ENCODE measurements at regions of chr19 and their contacts with region 1.

Region 1: DNA sequence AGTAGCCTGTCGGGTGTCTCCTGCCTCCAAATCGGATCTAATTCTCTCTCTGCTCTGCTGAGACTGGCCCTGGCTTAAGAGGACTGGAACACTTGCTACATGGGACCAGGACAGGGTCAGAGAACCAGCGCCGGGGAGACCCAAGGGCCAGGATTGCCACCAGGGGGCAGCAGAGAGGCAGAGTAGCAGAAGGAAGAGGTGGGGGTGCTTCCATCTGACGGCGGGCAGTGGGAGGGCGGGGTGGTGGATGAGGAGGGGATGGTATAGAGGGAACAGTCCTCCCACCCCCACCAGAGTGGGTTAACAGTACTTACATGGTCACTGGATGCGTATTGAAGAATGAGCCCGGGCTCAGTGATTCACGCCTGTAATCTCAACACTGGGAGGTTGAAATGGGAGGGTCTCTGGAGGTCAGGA is 11.9 kb downstream of the SELENOW start:
- DNase-seq: peak; percentile 82
- H3K4me3 Mint-ChIP-seq: no peak overlapping the region
- H3K27ac Mint-ChIP-seq: no peak overlapping the region
- H3K4me1 Mint-ChIP-seq: peaks cover 9% of the 10 kb centered on the region
- H3K27me3 Mint-ChIP-seq: no peaks in the 10 kb centered on the region
- CTCF ChIP-seq: peak; percentile 84

Region 2: DNA sequence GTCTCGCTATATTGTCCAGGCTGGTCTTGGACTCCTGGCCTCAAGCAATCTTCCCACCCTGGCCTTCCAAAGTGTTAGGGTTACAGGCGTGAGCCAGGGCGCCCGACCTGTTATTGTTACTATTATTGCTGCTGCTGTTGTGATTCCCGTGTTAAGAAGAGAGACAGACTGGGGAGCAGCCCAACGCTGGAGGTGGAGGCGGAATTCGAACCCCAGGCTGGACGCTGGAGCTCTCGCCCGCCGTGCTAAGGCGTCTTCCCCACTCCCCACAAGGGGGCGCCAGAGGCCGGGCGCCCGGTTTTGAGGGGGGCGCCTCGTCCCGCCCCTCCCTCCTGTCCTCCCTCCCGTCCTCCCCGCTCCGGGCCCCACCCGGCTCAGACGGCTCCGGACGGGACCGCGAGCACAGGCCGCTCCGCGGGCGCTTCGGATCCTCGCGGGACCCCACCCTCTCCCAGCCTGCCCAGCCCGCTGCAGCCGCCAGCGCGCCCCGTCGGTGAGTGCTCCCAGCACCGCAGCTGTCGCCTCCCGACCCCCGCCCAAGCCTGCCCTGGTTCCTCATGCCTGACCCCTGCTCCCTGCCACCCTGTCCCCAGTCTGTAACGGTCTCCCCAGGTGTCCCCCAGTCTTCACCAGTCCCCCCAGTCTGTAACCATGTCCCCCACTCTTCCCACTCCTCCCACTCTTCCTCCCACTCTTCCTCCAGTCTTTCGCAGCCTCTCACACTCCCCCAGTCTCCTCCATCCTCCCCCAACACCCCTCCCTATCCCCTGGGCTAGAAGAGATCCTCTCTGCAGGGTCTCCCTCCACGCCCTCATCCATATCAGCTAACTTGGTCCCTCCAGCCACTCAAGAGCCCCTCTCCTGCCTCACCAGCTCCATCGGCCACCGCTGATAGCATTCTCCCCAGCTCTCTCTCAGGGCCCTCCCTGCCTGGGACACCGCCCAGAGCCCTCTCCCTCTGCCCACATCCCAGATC is 77.1 kb before region 1 on chr19 and contains the start of gene EHD2:
- CTCF ChIA-PET with region 1: interaction called, 9 read pairs
- POLR2A ChIA-PET with region 1: interaction called, 5 read pairs
- intact Hi-C with region 1: loop called (anchors 2 kb)
- DNase-seq: peak; percentile 81
- H3K4me3 Mint-ChIP-seq: peak within 1 kb of the TSS; percentile 90
- H3K27ac Mint-ChIP-seq: peak within 1 kb of the TSS; percentile 62
- H3K4me1 Mint-ChIP-seq: peaks cover 24% of the 10 kb centered on the region
- H3K27me3 Mint-ChIP-seq: no peaks in the 10 kb centered on the region
- CTCF ChIP-seq: peak; percentile 97
- total RNA-seq, gene EHD2: 88.8 and 104 TPM in 2 replicates

Region 3: GRCh38 chr19:47765523-47766358 is 24.7 kb before region 1 on chr19:
- CTCF ChIA-PET with region 1: interaction called, 6 read pairs
- POLR2A ChIA-PET with region 1: interaction called, 4 read pairs
- intact Hi-C with region 1: loop called (anchors 1 kb)
- DNase-seq: peak; percentile 69
- H3K4me3 Mint-ChIP-seq: no peak overlapping the region
- H3K27ac Mint-ChIP-seq: no peak overlapping the region
- H3K4me1 Mint-ChIP-seq: no peaks in the 10 kb centered on the region
- H3K27me3 Mint-ChIP-seq: no peaks in the 10 kb centered on the region
- CTCF ChIP-seq: peak; percentile 72

Region 4: DNA sequence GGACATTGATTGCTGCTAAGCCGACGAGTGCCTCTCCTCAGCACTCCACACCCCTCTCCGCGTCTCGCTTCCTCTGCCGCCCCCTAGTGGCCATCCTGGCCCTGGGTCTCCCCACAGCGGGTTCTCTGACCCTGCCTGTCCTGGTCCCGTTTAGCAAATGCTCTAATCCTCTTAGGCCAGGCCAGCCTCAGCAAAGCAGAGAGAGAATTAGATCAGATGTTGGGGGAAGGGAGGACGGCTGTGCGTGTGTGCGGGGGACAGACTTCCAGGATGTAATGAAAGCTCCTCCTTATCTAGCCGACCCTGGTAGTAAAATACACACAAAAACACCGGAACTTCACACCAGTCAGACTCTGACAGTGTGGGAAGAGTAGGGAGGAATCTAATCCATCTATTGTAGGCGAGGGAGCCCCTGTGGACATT is 73.1 kb after region 1 on chr19:
- CTCF ChIA-PET with region 1: interaction called, 10 read pairs
- POLR2A ChIA-PET with region 1: no interaction called
- intact Hi-C with region 1: loop called (anchors 1 kb)
- DNase-seq: peak; percentile 85
- H3K4me3 Mint-ChIP-seq: no peak overlapping the region
- H3K27ac Mint-ChIP-seq: no peak overlapping the region
- H3K4me1 Mint-ChIP-seq: no peaks in the 10 kb centered on the region
- H3K27me3 Mint-ChIP-seq: no peaks in the 10 kb centered on the region
- CTCF ChIP-seq: peak; percentile 93

Measured in MCF 10A (cell line).